CD14-positive monocyte (primary cell): ENCODE measurements at regions of chr7 and their contacts with region 1.

Region 1: GRCh38 chr7:44858161-44858560 is 10.3 kb upstream of the H2AZ2 start:
- DNase-seq: no peak
- H3K4me3 ChIP-seq: no peak overlapping the region
- H3K4me3 Mint-ChIP-seq: no peak overlapping the region
- H3K27ac ChIP-seq: no peak overlapping the region
- H3K27ac Mint-ChIP-seq: no peak overlapping the region
- H3K4me1 ChIP-seq: peaks cover 0 to 7% of the 10 kb centered on the region in 2 donors
- H3K4me1 Mint-ChIP-seq: peaks cover 2% of the 10 kb centered on the region
- H3K27me3 ChIP-seq: no peaks in the 10 kb centered on the region
- H3K27me3 Mint-ChIP-seq: peaks cover 0 to 7% (median 3%) of the 10 kb centered on the region in 3 donors
- CTCF ChIP-seq: no peak

Region 2: DNA sequence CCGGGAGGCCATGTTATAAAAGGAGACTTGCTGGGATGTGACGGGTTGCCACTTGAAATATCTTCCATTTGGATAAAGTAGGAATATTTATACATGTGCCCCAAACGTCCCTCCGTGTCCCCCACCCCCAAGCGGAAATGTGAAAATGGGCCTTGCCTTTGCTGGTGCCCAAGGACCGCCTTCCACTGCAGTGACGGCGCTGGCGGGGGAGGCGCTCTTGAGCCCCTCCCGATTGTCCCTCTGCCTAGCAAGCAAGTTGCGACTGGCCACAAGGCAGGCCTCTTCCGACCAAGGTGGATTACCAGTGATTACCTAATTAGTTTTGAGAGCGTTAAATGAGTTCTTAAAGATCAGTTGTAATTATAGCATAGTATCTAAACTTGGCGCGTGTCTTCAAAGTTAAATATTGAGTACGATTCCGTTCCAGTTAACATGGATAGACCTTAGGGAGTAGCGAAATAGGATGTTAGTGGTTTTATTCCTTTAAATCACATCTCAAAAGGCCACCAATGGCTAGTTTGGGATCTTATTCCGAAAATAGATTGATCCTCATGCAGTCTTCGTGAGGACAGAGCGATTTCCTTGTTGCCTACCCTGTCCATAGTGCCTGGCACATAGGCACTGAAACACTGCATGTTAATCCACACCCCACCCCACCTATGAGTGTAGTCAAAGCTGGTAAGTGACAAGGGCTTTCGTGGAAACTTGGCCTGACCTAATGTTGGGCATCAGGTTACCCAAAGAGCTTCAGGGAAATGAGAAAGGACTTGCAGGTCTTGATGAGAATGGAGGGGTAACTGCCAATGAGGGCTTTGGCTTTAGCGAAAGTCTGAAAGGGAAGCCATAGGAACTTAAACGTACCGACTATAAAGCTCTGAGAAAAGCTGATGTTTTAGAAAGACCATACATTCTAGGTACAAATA is 60.6 kb before region 1 on chr7:
- intact Hi-C with region 1: no loop called
- DNase-seq: peak; percentile 78 to 86 (median 80)
- H3K4me3 ChIP-seq: peak overlapping the region; percentile 70 to 85 (median 82)
- H3K4me3 Mint-ChIP-seq: peak overlapping the region; percentile 92 to 96
- H3K27ac ChIP-seq: peak overlapping the region; percentile 94 to 95
- H3K27ac Mint-ChIP-seq: peak overlapping the region; percentile 97 to 99 (median 98)
- H3K4me1 ChIP-seq: peaks cover 23 to 30% of the 10 kb centered on the region in 2 donors
- H3K4me1 Mint-ChIP-seq: peaks cover 19% of the 10 kb centered on the region
- H3K27me3 ChIP-seq: no peaks in the 10 kb centered on the region
- H3K27me3 Mint-ChIP-seq: peaks cover 0 to 1% (median 0%) of the 10 kb centered on the region in 3 donors
- CTCF ChIP-seq: peak; percentile 63

Region 3: GRCh38 chr7:44894888-44895580 is 36.9 kb after region 1 on chr7:
- intact Hi-C with region 1: loop called in 1 of 2 experiments (anchors 5 kb)
- DNase-seq: no peak
- H3K4me3 ChIP-seq: no peak overlapping the region
- H3K4me3 Mint-ChIP-seq: no peak overlapping the region
- H3K27ac ChIP-seq: no peak overlapping the region
- H3K27ac Mint-ChIP-seq: peak overlapping the region in 2 of 7 donors; percentile 3 to 26
- H3K4me1 ChIP-seq: no peaks in the 10 kb centered on the region
- H3K4me1 Mint-ChIP-seq: peaks cover 12% of the 10 kb centered on the region
- H3K27me3 ChIP-seq: no peaks in the 10 kb centered on the region
- H3K27me3 Mint-ChIP-seq: peaks cover 0 to 4% (median 0%) of the 10 kb centered on the region in 3 donors
- CTCF ChIP-seq: no peak

Region 4: DNA sequence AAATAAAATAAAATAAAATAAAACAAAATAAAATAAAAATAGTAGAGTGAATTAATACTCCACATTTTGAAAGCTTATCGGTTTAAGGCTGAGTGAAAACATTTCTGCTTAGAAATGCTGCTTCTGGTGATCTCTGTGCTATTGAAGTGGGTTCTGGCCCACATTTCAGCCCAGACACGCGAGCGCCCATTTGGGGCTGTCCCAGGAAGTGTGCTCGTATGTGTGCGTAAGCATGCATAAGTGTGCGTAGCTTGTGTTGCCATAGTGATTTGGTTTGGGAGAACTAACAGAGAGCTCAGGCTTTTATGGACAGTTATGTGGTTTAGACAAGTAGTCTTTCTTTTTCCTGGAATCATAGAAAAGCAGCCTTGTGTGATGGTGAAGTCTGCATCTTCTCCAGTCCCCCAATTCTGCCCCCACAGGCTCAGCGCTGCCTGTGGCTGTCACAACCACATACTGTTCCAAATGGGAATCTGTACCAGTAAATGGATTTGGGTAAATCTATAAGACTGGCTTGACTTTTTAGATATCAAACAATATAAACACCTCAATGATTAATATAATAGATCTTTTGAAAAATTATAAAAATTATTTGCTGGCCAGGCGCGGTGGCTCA is 56.9 kb after region 1 on chr7:
- intact Hi-C with region 1: loop called in 1 of 2 experiments (anchors 2 kb)
- DNase-seq: peak; percentile 62 to 84 (median 64)
- H3K4me3 ChIP-seq: no peak overlapping the region
- H3K4me3 Mint-ChIP-seq: no peak overlapping the region
- H3K27ac ChIP-seq: peak overlapping the region in 1 of 2 donors; percentile 16
- H3K27ac Mint-ChIP-seq: peak overlapping the region in 3 of 7 donors; percentile 41 to 79 (median 57)
- H3K4me1 ChIP-seq: no peaks in the 10 kb centered on the region
- H3K4me1 Mint-ChIP-seq: peaks cover 3% of the 10 kb centered on the region
- H3K27me3 ChIP-seq: no peaks in the 10 kb centered on the region
- H3K27me3 Mint-ChIP-seq: peaks cover 0 to 6% (median 1%) of the 10 kb centered on the region in 3 donors
- CTCF ChIP-seq: no peak

Region 5: DNA sequence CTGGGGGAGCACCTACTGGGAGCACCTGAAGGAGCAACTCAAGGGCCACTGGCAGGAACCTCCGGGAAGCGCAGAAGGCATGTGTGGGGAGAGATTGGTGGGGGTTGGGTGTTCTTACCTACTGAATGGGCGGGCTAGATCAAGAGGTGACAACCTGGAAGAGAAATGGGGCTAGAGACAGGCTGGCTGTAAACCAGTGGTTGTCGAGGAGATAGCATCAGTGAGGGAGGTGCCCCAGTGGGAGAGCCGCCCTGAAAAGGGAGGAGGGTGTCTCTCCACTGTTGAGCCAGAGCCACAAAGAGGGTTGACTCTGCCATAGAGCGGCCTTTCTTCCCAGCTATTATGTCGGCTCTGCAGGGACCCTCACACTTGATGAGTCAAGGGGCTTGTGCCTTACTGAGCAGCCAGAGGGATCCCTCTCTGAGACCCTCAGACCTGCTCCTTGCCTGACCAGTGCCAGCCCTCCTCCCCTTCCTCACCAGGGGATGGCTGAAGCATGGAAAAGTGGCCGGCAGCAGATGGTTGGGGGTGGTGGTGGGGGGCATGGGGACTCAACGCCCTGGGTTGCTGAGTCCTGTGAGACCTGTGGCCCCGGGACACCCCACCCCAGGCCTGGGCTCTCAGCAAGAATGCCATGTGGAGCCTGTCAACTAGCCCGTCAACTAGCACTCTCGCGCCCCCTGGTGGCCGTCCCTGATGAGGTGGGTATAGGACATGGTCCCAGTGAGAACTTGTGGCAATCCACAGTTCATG is 63.6 kb after region 1 on chr7:
- intact Hi-C with region 1: loop called (anchors 2 kb)
- DNase-seq: peak; percentile 81 to 83 (median 83)
- H3K4me3 ChIP-seq: no peak overlapping the region
- H3K4me3 Mint-ChIP-seq: no peak overlapping the region
- H3K27ac ChIP-seq: no peak overlapping the region
- H3K27ac Mint-ChIP-seq: peak overlapping the region in 2 of 7 donors; percentile 21 to 80
- H3K4me1 ChIP-seq: peaks cover 0 to 6% of the 10 kb centered on the region in 2 donors
- H3K4me1 Mint-ChIP-seq: peaks cover 5% of the 10 kb centered on the region
- H3K27me3 ChIP-seq: no peaks in the 10 kb centered on the region
- H3K27me3 Mint-ChIP-seq: peaks cover 0 to 3% (median 0%) of the 10 kb centered on the region in 3 donors
- CTCF ChIP-seq: peak; percentile 89

Region 6: GRCh38 chr7:44962483-44963251 is 104.5 kb after region 1 on chr7:
- intact Hi-C with region 1: no loop called
- DNase-seq: peak in 1 of 3 donors; percentile 15
- H3K4me3 ChIP-seq: no peak overlapping the region
- H3K4me3 Mint-ChIP-seq: no peak overlapping the region
- H3K27ac ChIP-seq: no peak overlapping the region
- H3K27ac Mint-ChIP-seq: peak overlapping the region in 1 of 7 donors; percentile 40
- H3K4me1 ChIP-seq: peaks cover 18 to 21% of the 10 kb centered on the region in 2 donors
- H3K4me1 Mint-ChIP-seq: peaks cover 22% of the 10 kb centered on the region
- H3K27me3 ChIP-seq: no peaks in the 10 kb centered on the region
- H3K27me3 Mint-ChIP-seq: peaks cover 0 to 6% (median 3%) of the 10 kb centered on the region in 3 donors
- CTCF ChIP-seq: no peak

Region 7: DNA sequence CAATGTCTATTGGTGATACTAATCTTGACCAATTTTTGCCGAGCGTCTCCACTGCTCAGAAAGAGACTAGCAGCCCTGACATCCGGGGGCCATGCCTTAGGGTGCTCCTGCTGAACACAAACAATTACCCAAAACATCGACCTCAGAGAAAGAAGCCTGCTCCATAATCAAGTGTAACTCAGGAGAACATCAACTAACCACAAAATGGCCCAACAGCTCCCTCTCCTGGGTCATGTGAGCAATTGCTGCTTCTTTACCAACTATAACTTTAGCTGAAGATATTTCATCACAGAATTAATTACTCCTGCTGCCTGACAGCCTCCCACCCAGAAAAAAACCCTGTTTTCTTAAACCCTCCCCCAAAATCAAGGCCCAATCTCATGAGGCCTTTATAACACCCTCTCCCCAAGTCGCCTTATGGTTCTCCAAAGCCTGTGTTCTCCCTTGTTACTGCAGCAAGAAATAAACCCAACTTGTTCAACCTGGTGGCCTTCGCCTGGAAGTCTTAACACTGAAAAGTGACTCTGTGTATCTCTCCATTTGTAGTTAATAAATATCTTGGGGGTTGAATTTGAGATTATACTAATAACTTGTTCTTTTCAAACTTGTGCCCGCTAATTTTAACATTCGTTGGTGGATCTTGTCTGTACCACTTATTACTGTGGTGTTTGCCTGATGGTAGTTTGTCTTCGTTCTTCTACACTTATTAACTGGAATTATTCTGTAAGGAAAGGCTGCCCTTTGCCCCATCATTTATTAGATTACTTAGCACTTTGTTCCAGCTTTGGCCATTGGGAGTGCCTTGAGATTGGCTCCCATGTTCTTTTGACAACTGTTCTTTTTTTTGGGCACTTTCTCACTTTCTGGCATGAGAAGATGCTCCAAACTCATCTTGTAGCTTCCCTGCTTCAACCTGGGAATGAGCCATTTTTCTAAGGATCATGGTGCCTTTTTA is 278.2 kb after region 1 on chr7:
- intact Hi-C with region 1: loop called in 1 of 2 experiments (anchors 10 kb)
- DNase-seq: peak; percentile 65 to 84 (median 76)
- H3K4me3 ChIP-seq: no peak overlapping the region
- H3K4me3 Mint-ChIP-seq: no peak overlapping the region
- H3K27ac ChIP-seq: no peak overlapping the region
- H3K27ac Mint-ChIP-seq: peak overlapping the region in 1 of 7 donors; percentile 54
- H3K4me1 ChIP-seq: no peaks in the 10 kb centered on the region
- H3K4me1 Mint-ChIP-seq: peaks cover 11% of the 10 kb centered on the region
- H3K27me3 ChIP-seq: no peaks in the 10 kb centered on the region
- H3K27me3 Mint-ChIP-seq: peaks cover 0 to 3% (median 0%) of the 10 kb centered on the region in 3 donors
- CTCF ChIP-seq: peak; percentile 89